ENCODE measurements at regions of chr12 and their contacts with region 1.

Region 1: GRCh38 chr12:69639400-69640016 is 28.8 kb upstream of the LRRC10 start:
- DNase-seq: peak; percentile 36 to 77
- H3K4me3 ChIP-seq: no peak overlapping the region
- H3K27ac ChIP-seq: no peak overlapping the region
- H3K4me1 ChIP-seq: peaks cover 0 to 7% (median 2%) of the 10 kb centered on the region in 4 experiments; a peak in 3 of 7 replicates
- H3K27me3 ChIP-seq: no peaks in the 10 kb centered on the region
- CTCF ChIP-seq: peak; percentile 78 to 94 (median 88)
- EP300 ChIP-seq: no peak
- POLR2A ChIP-seq: no peak
- RAD21 ChIP-seq: peak; percentile 64 to 74

Region 2: DNA sequence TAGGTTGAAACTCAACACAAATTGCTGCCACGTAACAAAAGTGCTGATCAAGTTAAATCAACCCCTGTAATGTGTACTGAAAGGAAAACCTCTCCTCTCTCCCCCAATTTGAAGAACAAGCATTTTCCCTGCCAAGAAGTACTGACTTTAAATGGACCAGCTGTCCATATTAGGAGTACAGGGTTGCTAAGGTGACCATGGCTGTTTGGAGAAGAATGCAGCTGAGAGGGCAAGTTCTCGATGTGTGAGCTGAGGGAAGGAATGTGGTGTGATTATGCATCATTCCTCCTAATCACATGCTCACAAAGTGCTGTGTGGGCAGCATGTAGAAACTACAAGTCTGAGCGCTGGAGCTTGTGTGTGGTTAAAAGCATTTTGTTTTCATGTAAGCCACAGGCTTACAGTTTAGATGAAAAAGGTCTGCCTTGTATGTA is 105.1 kb before region 1 on chr12:
- CTCF ChIA-PET with region 1: no interaction called
- POLR2A ChIA-PET with region 1: no interaction called
- DNase-seq: peak in 1 of 2 experiments; percentile 36
- H3K4me3 ChIP-seq: no peak overlapping the region
- H3K27ac ChIP-seq: peak overlapping the region; percentile 41; the same call in 1 of the 2 replicates
- H3K4me1 ChIP-seq: peaks cover 0 to 9% (median 1%) of the 10 kb centered on the region in 4 experiments; a peak in 3 of 7 replicates
- H3K27me3 ChIP-seq: no peaks in the 10 kb centered on the region
- CTCF ChIP-seq: no peak
- EP300 ChIP-seq: peak in 1 of 2 experiments; percentile 78; a peak in 1 of 3 replicates
- POLR2A ChIP-seq: peak in 1 of 2 experiments; percentile 61; a peak in 2 of 3 replicates
- RAD21 ChIP-seq: peak in 1 of 2 experiments; percentile 4; a peak in 1 of 4 replicates

Region 3: GRCh38 chr12:69616025-69616424 is 23.5 kb before region 1 on chr12:
- CTCF ChIA-PET with region 1: interaction called, 16 read pairs
- POLR2A ChIA-PET with region 1: no interaction called
- DNase-seq: no peak
- H3K4me3 ChIP-seq: no peak overlapping the region
- H3K27ac ChIP-seq: no peak overlapping the region
- H3K4me1 ChIP-seq: no peaks in the 10 kb centered on the region
- H3K27me3 ChIP-seq: no peaks in the 10 kb centered on the region; a peak in 1 of 7 replicates
- CTCF ChIP-seq: no peak
- EP300 ChIP-seq: no peak
- POLR2A ChIP-seq: no peak
- RAD21 ChIP-seq: no peak

Region 4: GRCh38 chr12:69655377-69656336 is 16.1 kb after region 1 on chr12:
- CTCF ChIA-PET with region 1: interaction called, 17 read pairs
- POLR2A ChIA-PET with region 1: no interaction called
- DNase-seq: no peak
- H3K4me3 ChIP-seq: no peak overlapping the region
- H3K27ac ChIP-seq: no peak overlapping the region
- H3K4me1 ChIP-seq: no peaks in the 10 kb centered on the region
- H3K27me3 ChIP-seq: peaks cover 0 to 2% (median 0%) of the 10 kb centered on the region in 4 experiments; a peak in 2 of 7 replicates
- CTCF ChIP-seq: no peak
- EP300 ChIP-seq: no peak
- POLR2A ChIP-seq: no peak
- RAD21 ChIP-seq: no peak